ENCODE measurements at regions of chr3 and their contacts with region 1.

Region 1: DNA sequence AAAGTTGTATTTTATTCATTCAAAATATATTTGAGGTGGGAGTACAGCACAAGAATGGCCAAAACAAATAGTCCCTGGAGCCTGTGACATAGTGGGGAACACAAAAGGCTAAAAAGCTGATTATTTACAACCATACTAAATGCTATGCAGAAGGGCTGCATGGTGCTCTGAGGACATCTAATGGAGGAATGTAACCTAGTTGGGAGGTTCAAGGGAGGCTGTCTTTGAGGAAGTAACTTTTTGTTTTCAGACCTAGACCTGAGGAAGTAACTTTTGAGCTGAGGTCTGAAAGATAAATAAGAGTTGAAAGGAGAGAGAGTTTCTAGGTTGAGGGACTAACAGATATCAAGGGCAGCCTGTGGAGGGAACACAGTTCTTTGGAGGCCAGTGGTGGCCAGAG is 34.8 kb upstream of the RASA2 start:
- DNase-seq: peak; percentile 63
- ATAC-seq: peak; percentile 79
- H3K4me3 Mint-ChIP-seq: no peak overlapping the region
- H3K27ac Mint-ChIP-seq: no peak overlapping the region
- H3K4me1 Mint-ChIP-seq: peaks cover 22% of the 10 kb centered on the region
- H3K27me3 Mint-ChIP-seq: no peaks in the 10 kb centered on the region

Region 2: DNA sequence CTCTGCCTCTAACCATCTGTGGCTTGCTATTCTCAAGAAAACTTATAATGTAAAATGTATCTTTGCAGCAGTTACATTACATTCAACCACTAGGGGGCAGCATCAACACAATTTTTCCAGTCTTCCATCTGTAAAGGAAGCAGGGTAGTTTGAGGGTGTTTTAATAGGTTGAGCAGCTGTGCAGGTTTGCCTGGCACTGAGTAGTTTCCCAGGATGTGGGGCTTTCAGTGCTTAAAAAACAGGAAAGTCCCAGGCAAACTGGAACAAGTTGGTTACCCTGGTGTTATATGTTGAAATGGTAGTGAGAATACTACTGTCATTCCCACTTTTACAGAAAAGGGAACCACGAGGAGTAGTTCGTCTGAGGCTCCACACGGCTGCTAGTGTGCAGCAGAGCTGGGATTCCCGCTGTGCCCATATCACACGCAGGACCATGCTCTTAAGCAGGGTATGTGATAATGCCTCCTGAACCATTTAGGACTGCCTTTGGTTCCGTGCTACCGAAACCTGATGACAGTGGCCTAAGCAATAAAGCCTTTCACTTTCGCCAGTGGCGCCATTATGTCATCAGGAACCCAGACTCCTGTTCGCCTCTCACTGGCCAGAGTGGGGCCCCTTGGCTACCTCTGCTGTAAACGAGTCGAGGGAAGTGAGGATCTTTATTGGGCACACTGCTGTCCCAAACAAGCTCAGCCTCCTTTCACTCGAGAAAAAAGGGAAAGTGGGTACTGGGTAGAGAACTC is 148.4 kb before region 1 on chr3:
- CTCF ChIA-PET with region 1: interaction called, 111 read pairs
- POLR2A ChIA-PET with region 1: no interaction called
- intact Hi-C with region 1: loop called (anchors 1 kb)
- DNase-seq: peak; percentile 70
- ATAC-seq: peak; percentile 48
- H3K4me3 Mint-ChIP-seq: no peak overlapping the region
- H3K27ac Mint-ChIP-seq: no peak overlapping the region
- H3K4me1 Mint-ChIP-seq: peaks cover 51% of the 10 kb centered on the region
- H3K27me3 Mint-ChIP-seq: no peaks in the 10 kb centered on the region

Region 3: DNA sequence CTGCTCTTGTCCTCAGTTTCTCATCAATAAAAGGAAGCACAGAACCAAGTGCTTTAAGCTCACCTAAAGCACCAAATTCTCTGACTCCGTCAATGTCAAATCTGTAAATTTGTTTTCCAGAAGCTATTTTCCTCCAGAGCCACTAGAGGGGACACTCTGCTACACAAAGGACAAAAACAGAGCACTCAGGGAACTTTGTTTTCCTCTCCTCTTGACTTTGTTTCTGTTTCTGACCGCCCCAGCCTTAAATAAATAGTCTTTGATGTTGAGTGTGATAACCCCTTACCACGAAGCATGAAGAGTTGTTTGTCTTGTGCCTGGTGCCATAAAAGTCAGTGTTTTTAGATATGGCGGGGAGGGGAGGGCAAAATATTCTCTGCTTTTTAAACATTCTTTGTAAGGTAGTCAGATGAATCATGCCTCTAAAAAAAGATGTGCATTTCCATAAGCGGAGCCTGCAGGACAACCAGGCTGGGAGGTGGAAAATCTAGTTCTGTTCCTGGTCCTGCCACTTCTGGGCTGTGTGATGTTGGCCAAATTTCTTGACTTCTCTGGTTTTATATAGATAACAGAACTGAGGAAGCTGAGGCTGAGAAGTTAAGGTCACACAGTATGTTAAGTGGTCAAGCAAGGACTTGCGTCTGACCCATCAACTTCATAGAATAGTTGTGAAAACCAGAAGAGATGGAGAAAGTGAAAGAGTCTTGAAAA is 91.0 kb before region 1 on chr3:
- CTCF ChIA-PET with region 1: interaction called, 96 read pairs
- POLR2A ChIA-PET with region 1: no interaction called
- intact Hi-C with region 1: loop called (anchors 1 kb)
- DNase-seq: no peak
- ATAC-seq: peak; percentile 87
- H3K4me3 Mint-ChIP-seq: peak overlapping the region; percentile 20
- H3K27ac Mint-ChIP-seq: peak overlapping the region; percentile 55
- H3K4me1 Mint-ChIP-seq: peaks cover 9% of the 10 kb centered on the region
- H3K27me3 Mint-ChIP-seq: no peaks in the 10 kb centered on the region

Region 4: GRCh38 chr3:141370065-141370533 is 81.9 kb before region 1 on chr3:
- CTCF ChIA-PET with region 1: interaction called, 27 read pairs
- POLR2A ChIA-PET with region 1: no interaction called
- intact Hi-C with region 1: loop called in 1 of 2 experiments (anchors 1 kb)
- DNase-seq: peak; percentile 68
- ATAC-seq: peak; percentile 96
- H3K4me3 Mint-ChIP-seq: no peak overlapping the region
- H3K27ac Mint-ChIP-seq: peak overlapping the region; percentile 35
- H3K4me1 Mint-ChIP-seq: peaks cover 32% of the 10 kb centered on the region
- H3K27me3 Mint-ChIP-seq: no peaks in the 10 kb centered on the region

Region 5: DNA sequence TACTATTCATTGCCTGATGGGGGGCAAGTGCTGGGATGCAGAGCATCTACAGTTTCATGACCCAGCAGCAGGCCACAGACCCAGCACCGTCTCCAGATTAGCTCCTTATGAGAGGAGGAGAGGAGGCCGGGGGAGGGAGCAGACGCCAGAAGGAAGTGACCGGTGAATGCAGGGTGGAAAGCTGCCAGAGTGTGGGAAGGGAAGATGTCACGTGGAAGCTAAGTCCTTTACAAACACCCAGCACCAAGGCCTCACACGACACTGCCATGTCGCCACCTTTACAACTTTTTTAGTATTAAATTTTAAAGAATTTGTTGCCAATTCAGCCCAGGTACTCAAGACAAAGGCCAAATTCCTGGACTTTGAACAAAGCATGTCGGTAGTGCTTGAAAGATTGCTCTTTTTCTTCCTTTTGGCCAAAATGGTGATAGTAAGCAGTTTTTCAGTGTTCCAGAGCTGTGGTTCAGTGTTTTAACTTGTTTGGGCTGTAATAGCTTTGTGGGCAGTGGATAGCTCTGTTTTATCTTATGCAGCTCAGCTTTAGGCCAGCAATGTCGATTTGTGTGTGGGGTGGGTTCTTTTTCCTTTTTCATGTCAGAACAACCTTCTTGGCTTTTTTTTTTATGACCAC is 25.5 kb before region 1 on chr3:
- CTCF ChIA-PET with region 1: interaction called, 12 read pairs
- POLR2A ChIA-PET with region 1: no interaction called
- intact Hi-C with region 1: no loop called
- DNase-seq: no peak
- ATAC-seq: no peak
- H3K4me3 Mint-ChIP-seq: no peak overlapping the region
- H3K27ac Mint-ChIP-seq: peak overlapping the region; percentile 34
- H3K4me1 Mint-ChIP-seq: peaks cover 21% of the 10 kb centered on the region
- H3K27me3 Mint-ChIP-seq: no peaks in the 10 kb centered on the region

Region 6: GRCh38 chr3:141465221-141465620 is 13.2 kb after region 1 on chr3:
- CTCF ChIA-PET with region 1: interaction called, 82 read pairs
- POLR2A ChIA-PET with region 1: no interaction called
- intact Hi-C with region 1: no loop called
- DNase-seq: no peak
- ATAC-seq: no peak
- H3K4me3 Mint-ChIP-seq: no peak overlapping the region
- H3K27ac Mint-ChIP-seq: no peak overlapping the region
- H3K4me1 Mint-ChIP-seq: peaks cover 3% of the 10 kb centered on the region
- H3K27me3 Mint-ChIP-seq: no peaks in the 10 kb centered on the region